ENCODE measurements at regions of chr18 and their contacts with region 1.

Region 1: GRCh38 chr18:76803814-76804213 is 18.5 kb upstream of the ZNF236 start:
- DNase-seq: peak; percentile 71
- CTCF ChIP-seq: peak; percentile 88

Region 2: GRCh38 chr18:75884728-75885127 is 919.1 kb before region 1 on chr18:
- CTCF ChIA-PET with region 1: no interaction called
- POLR2A ChIA-PET with region 1: no interaction called
- DNase-seq: no peak
- CTCF ChIP-seq: no peak

Region 3: DNA sequence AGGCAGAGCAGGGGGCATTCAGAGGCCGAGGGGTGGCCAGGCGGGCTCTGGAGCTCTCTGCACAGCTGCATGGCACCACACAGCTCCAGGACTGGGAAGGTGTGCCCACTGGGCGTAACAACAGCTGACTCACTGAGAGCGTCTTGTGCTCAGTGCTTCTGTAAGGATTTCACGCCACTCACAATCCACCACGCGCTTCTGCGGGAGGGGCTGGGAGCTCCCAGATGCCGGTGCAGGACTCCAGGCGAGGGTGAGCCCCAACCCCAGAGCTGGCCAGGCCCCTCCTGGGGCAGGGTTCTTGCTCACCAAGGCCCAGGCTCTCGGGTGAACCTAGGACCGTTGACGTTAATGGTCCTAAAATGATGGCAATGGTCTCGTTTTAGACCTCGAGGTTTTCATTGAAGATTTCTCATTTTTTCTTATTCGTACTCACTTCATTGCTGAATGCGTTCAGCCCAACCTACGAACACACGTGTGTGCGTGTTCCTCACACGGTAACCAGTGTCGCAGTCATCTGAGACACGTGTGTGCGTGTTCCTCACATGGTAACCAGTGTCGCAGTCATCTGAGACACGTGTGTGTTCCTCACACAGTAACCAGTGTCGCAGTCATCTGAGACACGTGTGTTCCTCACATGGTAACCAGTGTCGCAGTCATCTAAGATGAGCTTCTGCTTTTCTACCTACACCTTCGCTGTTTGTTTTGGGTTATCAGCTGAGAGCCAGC is 19.9 kb before region 1 on chr18:
- CTCF ChIA-PET with region 1: interaction called, 51 read pairs
- POLR2A ChIA-PET with region 1: no interaction called
- DNase-seq: no peak
- CTCF ChIP-seq: no peak

Region 4: DNA sequence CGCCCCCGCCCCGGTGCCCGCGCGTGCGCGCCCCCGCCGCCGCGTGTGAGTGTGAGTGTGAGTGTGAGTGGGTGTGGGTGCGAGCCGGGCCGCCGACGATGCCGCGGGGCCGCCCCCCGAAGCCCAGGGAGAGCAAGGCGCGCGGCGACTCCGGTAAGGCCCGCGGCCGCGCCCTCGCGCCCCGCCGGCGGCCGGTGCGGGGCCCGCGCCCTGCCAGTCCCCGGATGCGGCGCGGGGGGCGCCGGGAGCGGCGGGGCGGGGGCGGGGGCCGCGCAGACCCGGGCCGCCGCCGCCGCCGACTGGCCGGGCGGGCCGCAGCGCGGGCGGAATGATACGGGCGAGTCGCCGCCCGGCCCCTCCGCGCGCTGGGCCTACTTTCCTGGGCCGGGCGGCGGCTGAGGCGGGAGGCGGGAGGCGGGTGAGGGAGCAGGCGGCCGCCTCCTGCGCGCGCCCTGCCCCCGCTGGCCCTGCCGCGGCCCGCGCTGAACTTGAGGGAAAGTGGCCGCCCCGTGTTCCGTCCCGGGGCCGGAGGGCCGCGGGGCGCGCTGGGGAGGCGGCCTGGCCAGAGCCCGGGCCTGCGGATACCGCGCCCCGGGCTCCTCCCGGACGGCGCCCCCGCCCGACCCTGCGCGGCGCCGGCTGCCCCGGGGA is 18.8 kb after region 1 on chr18 and contains the start of gene ZNF236:
- CTCF ChIA-PET with region 1: interaction called, 179 read pairs
- POLR2A ChIA-PET with region 1: no interaction called
- DNase-seq: peak; percentile 84
- CTCF ChIP-seq: peak; percentile 5

Region 5: GRCh38 chr18:76922107-76922506 is 118.3 kb after region 1 on chr18:
- CTCF ChIA-PET with region 1: interaction called, 17 read pairs
- POLR2A ChIA-PET with region 1: no interaction called
- DNase-seq: peak; percentile 80
- CTCF ChIP-seq: peak; percentile 80

Region 6: DNA sequence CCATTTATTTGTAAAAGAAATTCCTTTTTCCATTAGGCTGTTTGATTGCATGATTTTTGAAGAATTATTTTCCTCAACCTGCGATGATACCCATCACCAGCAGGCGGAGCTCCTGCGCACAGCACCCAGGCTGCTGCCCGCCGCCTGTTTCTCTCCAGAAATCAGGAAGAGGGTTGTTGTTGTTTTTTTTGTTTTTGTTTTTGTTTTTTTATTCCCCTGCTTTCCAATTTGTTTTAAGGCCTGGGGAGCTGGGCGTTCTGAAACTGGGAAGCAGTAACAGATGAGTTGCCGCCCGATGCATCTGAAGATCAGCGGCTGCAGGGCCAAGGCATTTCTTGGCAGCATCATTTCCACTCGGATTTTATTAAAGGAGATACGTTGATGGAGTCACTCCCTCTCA is 196.7 kb after region 1 on chr18:
- CTCF ChIA-PET with region 1: interaction called, 13 read pairs
- POLR2A ChIA-PET with region 1: no interaction called
- DNase-seq: peak; percentile 74
- CTCF ChIP-seq: peak; percentile 96

Region 7: GRCh38 chr18:77207540-77207939 is 403.7 kb after region 1 on chr18:
- CTCF ChIA-PET with region 1: interaction called, 30 read pairs
- POLR2A ChIA-PET with region 1: no interaction called
- DNase-seq: no peak
- CTCF ChIP-seq: peak; percentile 34

Measured in GM10248 (cell line).